ENCODE measurements at regions of chr2 and their contacts with region 1.

Region 1: GRCh38 chr2:75157430-75157829 is 41.9 kb downstream of the TACR1 start:
- DNase-seq: peak; percentile 10 to 58
- H3K4me3 ChIP-seq: no peak overlapping the region
- H3K27ac ChIP-seq: no peak overlapping the region
- H3K4me1 ChIP-seq: peaks cover 39% of the 10 kb centered on the region
- H3K27me3 ChIP-seq: no peaks in the 10 kb centered on the region
- CTCF ChIP-seq: peak; percentile 68

Region 2: DNA sequence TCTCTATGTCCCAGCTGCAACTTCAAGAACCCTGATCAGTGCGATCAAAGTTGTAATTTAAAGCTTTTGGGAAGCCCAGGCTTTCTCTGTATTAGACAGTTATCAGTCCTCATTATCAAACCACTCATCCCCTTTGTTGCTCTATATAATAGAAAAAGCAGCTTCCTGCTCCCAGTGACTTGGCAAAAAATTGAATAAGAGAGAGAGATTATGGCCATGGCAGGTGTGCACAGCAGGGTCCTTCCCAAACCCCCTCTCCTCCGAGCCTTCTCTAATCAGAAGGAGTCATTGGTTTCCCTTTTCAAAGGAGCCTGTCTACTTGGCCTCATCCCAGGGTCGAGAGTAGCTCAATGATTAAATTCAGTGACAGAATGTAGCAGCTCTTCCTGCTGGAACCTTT is 421.9 kb before region 1 on chr2:
- CTCF ChIA-PET with region 1: no interaction called
- POLR2A ChIA-PET with region 1: no interaction called
- intact Hi-C with region 1: no loop called
- DNase-seq: no peak
- H3K4me3 ChIP-seq: no peak overlapping the region
- H3K27ac ChIP-seq: peak overlapping the region; percentile 75
- H3K4me1 ChIP-seq: peaks cover 45% of the 10 kb centered on the region
- H3K27me3 ChIP-seq: no peaks in the 10 kb centered on the region
- CTCF ChIP-seq: no peak

Region 3: DNA sequence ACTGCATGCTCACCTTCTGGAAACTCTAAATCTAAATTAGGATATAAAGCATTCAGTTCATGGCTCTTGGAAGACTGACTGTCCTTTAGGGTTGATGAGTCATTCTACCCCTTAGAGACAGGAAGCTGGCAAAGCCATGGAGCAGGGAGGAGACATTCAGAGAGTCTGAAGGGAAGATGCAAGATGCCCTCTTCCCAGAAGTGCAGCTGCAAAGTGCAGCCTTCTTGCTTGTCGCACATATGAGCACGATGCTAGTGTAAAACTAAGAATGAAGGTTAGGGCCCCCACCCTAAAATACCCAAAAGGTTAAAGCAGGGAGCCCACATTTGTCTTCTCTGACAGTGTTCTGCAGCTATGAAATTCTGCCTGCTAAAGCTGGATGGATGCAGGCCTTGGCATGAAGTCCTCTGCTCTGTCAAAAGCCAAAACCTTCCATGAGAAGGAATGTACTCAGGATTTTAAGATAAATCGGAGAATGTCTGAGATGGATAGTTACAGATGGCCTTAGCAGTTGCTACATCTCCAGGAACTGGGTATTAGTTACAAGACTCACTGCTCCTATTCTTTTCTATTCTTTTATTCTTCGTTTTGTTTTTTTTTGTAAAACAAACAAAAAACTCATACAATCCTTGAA is 109.3 kb before region 1 on chr2:
- CTCF ChIA-PET with region 1: no interaction called
- POLR2A ChIA-PET with region 1: no interaction called
- intact Hi-C with region 1: no loop called
- DNase-seq: peak in 1 of 2 experiments; percentile 45
- H3K4me3 ChIP-seq: no peak overlapping the region
- H3K27ac ChIP-seq: no peak overlapping the region
- H3K4me1 ChIP-seq: peaks cover 14% of the 10 kb centered on the region
- H3K27me3 ChIP-seq: no peaks in the 10 kb centered on the region
- CTCF ChIP-seq: no peak

Region 4: DNA sequence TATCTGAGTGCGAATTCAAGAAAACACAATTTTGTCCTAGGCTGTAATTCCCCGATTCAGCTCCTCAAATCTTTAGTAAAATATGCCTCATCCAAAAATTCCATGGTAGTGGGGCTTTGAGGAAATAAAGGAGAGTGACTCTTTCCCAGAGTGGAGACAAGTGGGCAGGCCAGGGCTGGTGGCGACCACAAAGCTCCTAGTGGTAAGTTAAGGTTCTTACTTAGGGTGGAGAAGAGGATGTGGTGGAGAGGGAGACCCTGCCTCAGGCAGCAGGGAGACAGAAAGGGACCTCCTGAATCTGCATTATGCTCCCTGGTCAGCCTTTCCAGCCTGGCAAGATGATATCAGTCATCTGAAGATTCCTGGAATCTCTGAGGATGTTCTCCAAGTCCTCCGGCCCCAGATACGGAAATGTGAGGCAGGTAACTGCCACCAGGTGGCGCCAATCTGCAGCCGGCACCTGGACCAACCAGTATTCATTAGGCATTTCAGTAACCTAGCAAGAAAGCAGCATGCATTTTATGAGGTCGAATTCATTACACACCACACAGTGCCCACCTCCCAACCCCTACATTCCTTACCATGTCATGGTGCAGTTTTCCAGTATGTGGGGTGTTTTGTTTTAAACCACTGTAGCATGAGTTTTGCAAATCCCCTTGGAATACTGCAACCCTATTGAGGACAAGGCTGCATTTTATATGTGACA is 92.6 kb before region 1 on chr2:
- CTCF ChIA-PET with region 1: no interaction called
- POLR2A ChIA-PET with region 1: no interaction called
- intact Hi-C with region 1: loop called (anchors 10 kb)
- DNase-seq: peak; percentile 55
- H3K4me3 ChIP-seq: no peak overlapping the region
- H3K27ac ChIP-seq: no peak overlapping the region
- H3K4me1 ChIP-seq: no peaks in the 10 kb centered on the region
- H3K27me3 ChIP-seq: no peaks in the 10 kb centered on the region
- CTCF ChIP-seq: peak; percentile 94

Region 5: DNA sequence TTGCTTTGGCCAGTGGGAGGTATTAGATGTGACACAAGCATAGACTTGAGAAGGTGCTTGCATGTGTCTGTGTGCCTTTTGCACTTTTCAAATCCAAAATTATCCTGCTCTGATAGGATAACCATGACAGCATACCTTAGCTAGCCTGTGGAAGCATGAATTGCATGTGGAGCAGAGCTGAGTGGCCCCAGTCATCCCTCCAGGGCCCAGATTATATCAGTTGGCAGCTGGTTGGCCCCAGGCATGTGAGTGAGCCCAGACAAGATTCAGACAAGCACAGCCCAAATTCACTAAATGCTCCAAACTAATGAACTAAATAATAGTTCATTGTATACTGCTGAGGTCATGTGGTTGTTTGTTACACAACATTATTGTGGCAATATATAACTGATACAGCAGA is 23.0 kb after region 1 on chr2:
- CTCF ChIA-PET with region 1: no interaction called
- POLR2A ChIA-PET with region 1: no interaction called
- intact Hi-C with region 1: no loop called
- DNase-seq: no peak
- H3K4me3 ChIP-seq: no peak overlapping the region
- H3K27ac ChIP-seq: no peak overlapping the region
- H3K4me1 ChIP-seq: no peaks in the 10 kb centered on the region
- H3K27me3 ChIP-seq: no peaks in the 10 kb centered on the region
- CTCF ChIP-seq: no peak

Region 6: GRCh38 chr2:75221862-75222261 is 64.4 kb after region 1 on chr2:
- CTCF ChIA-PET with region 1: no interaction called
- POLR2A ChIA-PET with region 1: no interaction called
- intact Hi-C with region 1: no loop called
- DNase-seq: no peak
- H3K4me3 ChIP-seq: no peak overlapping the region
- H3K27ac ChIP-seq: no peak overlapping the region
- H3K4me1 ChIP-seq: no peaks in the 10 kb centered on the region
- H3K27me3 ChIP-seq: no peaks in the 10 kb centered on the region
- CTCF ChIP-seq: no peak

Measured in PC-9 (cell line).